CD4-positive, alpha-beta T cell (primary cell): ENCODE measurements at regions of chr9 and their contacts with region 1.

Region 1: DNA sequence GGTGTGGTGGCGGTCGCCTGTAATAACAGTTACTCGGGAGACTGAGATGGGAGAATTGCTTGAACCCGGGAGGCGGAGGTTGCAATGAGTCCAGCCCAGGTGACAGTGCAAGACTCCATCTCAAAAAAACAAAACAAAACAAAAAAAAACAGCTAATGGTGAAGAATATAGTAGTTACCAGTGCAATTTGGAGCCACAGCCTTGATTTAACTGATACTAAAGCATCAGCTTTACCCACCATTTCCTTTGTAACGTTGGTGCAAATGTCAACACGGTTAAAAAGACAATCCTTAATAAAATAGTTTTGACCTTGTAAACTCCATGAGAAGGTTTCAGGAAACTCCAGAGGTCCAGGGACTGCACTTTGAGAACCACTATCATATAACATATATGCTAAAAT is 41.8 kb downstream of the FNBP1 start:
- DNase-seq: peak in 1 of 14 experiments; percentile 40
- ATAC-seq: no peak
- H3K4me3 ChIP-seq: no peak overlapping the region
- H3K4me3 Mint-ChIP-seq: peak overlapping the region; percentile 38
- H3K27ac ChIP-seq: no peak overlapping the region
- H3K27ac Mint-ChIP-seq: peak overlapping the region; percentile 83
- H3K4me1 ChIP-seq: peaks cover 82% of the 10 kb centered on the region
- H3K4me1 Mint-ChIP-seq: peaks cover 70% of the 10 kb centered on the region
- H3K27me3 ChIP-seq: no peaks in the 10 kb centered on the region
- H3K27me3 Mint-ChIP-seq: no peaks in the 10 kb centered on the region
- CTCF ChIP-seq: no peak

Region 2: GRCh38 chr9:129235931-129236331 is 765.3 kb before region 1 on chr9:
- CTCF ChIA-PET with region 1: no interaction called
- POLR2A ChIA-PET with region 1: no interaction called
- intact Hi-C with region 1: no loop called
- DNase-seq: peak; percentile 45 to 92 (median 72)
- ATAC-seq: peak; percentile 82
- H3K4me3 ChIP-seq: peak overlapping the region; percentile 53
- H3K4me3 Mint-ChIP-seq: peak overlapping the region; percentile 94
- H3K27ac ChIP-seq: peak overlapping the region; percentile 14 to 79
- H3K27ac Mint-ChIP-seq: peak overlapping the region; percentile 99
- H3K4me1 ChIP-seq: peaks cover 52% of the 10 kb centered on the region
- H3K4me1 Mint-ChIP-seq: peaks cover 64% of the 10 kb centered on the region
- H3K27me3 ChIP-seq: no peaks in the 10 kb centered on the region
- H3K27me3 Mint-ChIP-seq: no peaks in the 10 kb centered on the region
- CTCF ChIP-seq: no peak

Region 3: DNA sequence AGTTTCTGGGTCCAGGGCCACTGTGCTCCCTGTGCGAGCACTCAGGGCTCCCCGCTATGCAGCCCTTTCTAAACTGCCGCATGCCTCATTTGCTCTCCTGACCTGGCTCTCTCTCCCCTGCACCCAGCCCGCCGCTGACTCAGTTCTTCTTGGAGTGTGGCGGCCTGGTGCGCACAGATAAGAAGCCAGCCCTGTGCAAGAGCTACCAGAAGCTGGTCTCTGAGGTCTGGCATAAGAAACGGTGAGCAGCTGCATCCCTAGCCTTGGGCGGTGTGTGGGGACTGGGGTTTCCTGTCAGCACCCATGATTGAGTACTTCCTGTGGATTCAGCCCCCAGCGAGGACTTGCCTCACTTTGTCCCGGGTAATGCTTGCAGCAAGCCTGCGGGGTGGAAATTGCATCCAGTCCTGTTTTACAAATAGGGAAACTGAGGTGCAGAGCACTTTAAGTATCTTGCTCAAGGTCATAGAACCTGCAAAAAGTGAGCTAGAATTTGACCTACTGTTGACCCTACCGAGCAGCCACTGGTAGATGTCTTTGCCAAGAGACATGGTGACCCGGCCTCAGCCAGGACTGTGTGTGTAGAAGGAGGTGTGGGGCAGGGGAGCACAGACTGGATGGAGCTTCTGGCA is 138.0 kb before region 1 on chr9:
- CTCF ChIA-PET with region 1: no interaction called
- POLR2A ChIA-PET with region 1: no interaction called
- intact Hi-C with region 1: no loop called
- DNase-seq: peak; percentile 39 to 83 (median 65)
- ATAC-seq: peak; percentile 63
- H3K4me3 ChIP-seq: no peak overlapping the region
- H3K4me3 Mint-ChIP-seq: peak overlapping the region; percentile 82
- H3K27ac ChIP-seq: peak overlapping the region in 1 of 2 donors; percentile 55
- H3K27ac Mint-ChIP-seq: peak overlapping the region; percentile 86
- H3K4me1 ChIP-seq: peaks cover 97% of the 10 kb centered on the region
- H3K4me1 Mint-ChIP-seq: peaks cover 68% of the 10 kb centered on the region
- H3K27me3 ChIP-seq: no peaks in the 10 kb centered on the region
- H3K27me3 Mint-ChIP-seq: no peaks in the 10 kb centered on the region
- CTCF ChIP-seq: no peak

Region 4: DNA sequence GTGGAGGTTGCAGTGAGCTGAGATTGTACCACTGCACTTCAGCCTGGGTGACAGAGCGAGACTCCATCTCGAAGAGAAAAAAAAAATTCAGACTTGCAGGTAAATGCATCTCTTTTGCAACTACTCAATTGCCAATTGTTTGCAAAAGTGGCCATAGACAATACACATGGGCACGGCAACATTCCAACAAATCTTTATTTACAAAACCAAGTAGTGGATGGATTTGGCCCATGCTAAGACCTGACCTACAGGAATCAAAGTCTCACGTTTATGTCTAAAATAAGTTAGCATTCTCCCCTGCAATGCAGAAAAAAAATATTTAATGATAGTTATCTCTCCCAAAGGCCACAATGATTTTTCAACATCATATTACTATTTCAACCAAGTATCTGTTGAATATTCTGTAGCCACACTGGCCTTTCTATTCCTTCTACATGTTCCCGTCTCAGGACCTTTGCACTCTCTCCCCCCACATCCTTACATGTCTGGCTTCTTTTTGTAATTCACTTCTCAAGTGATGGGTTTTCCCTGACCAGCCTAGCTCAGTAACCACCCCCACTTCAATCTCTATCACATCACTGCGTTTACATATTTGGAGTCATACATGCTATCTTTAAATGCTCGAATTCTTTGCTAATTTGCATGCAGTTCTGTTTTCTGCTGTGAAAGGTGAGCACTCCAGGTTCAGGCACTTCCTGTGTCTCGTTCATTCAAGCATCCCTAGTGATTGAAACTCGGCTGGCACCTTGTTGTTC is 12.4 kb before region 1 on chr9:
- CTCF ChIA-PET with region 1: interaction called, 3 read pairs
- POLR2A ChIA-PET with region 1: interaction called, 5 read pairs
- intact Hi-C with region 1: loop called (anchors 2 kb)
- DNase-seq: peak in 4 of 14 experiments; percentile 50 to 76 (median 64)
- ATAC-seq: peak; percentile 53
- H3K4me3 ChIP-seq: no peak overlapping the region
- H3K4me3 Mint-ChIP-seq: peak overlapping the region; percentile 22
- H3K27ac ChIP-seq: peak overlapping the region; percentile 68 to 86
- H3K27ac Mint-ChIP-seq: peak overlapping the region; percentile 93
- H3K4me1 ChIP-seq: peaks cover 81% of the 10 kb centered on the region
- H3K4me1 Mint-ChIP-seq: peaks cover 65% of the 10 kb centered on the region
- H3K27me3 ChIP-seq: no peaks in the 10 kb centered on the region
- H3K27me3 Mint-ChIP-seq: no peaks in the 10 kb centered on the region
- CTCF ChIP-seq: no peak